Endothelial cell of umbilical vein (primary cell): ENCODE measurements at regions of chr13 and their contacts with region 1.

Region 1: DNA sequence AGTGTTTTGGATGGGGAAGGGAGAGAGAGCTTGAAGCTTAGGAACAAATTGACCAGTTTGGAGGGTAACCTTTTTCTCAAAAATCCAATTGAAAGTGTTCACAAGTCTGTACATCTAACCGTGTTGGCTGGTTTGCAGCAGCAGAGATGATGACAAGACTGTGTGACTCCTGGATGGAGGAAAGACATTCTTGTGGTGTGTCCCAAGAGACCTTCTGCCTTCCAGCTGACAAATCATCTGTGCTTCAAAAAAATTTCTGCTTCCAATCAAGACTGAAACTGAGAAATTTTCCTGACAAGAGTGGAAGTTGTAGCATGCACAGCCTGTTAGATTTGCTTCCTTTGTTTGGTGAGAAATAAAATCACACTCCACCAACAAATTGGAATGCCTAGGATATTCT is 56.2 kb downstream of the LACC1 start:
- DNase-seq: no peak
- H3K4me3 ChIP-seq: no peak overlapping the region
- H3K27ac ChIP-seq: no peak overlapping the region
- H3K4me1 ChIP-seq: no peaks in the 10 kb centered on the region
- H3K27me3 ChIP-seq: peaks cover 16 to 20% of the 10 kb centered on the region in 2 experiments
- CTCF ChIP-seq: no peak
- POLR2A ChIP-seq: no peak

Region 2: GRCh38 chr13:43122791-43123190 is 813.1 kb before region 1 on chr13:
- CTCF ChIA-PET with region 1: no interaction called
- POLR2A ChIA-PET with region 1: no interaction called
- dilution Hi-C with region 1: no loop called
- intact Hi-C with region 1: loop called (anchors 5 kb)
- DNase-seq: no peak
- H3K4me3 ChIP-seq: no peak overlapping the region
- H3K27ac ChIP-seq: no peak overlapping the region
- H3K4me1 ChIP-seq: no peaks in the 10 kb centered on the region
- H3K27me3 ChIP-seq: peaks cover 2 to 5% of the 10 kb centered on the region in 2 experiments
- CTCF ChIP-seq: no peak
- POLR2A ChIP-seq: no peak